Sigmoid colon (tissue), 7 donors: ENCODE measurements at regions of chr16 and their contacts with region 1.

Region 1: DNA sequence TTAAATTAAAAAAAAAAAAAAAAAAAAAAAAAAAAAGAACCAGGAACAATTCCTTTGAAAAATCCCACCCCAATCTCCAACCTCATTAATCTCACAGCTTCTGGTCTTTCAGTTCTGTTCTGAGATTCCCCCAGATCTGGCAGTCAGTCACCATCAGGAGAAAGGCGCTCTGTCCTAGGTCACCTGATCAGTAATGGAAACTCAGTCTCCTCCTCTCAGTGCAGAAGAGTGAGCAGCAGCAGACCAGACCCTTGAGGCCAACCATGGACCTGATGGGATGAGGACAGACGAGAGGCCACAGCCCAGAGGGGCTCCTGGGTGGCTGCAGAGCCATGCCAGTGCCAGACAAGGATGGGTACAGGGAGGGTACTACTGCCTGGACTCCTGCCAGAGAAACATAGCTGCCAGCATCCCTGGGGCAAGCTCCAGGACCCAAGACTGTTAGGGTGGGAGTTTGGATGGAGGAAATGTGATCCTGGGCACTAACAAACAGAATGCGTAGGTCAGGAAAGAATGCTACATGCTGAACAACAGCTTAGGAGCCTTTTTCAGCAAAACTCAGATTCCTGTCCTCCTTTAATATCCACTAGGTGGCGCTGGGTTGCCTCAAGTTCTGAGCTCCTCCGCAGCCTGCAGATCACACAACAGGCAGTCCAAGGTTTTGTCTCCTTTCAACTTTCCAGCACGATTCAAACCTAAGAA is 28.7 kb downstream of the MPG start:
- DNase-seq: no peak
- H3K4me3 ChIP-seq: no peak overlapping the region
- H3K27ac ChIP-seq: no peak overlapping the region
- H3K4me1 ChIP-seq: peaks cover 0 to 7% (median 0%) of the 10 kb centered on the region in 4 donors
- H3K27me3 ChIP-seq: no peaks in the 10 kb centered on the region
- CTCF ChIP-seq: peak; percentile 20 to 83 (median 74)
- EP300 ChIP-seq: no peak
- POLR2A ChIP-seq: no peak

Region 2: DNA sequence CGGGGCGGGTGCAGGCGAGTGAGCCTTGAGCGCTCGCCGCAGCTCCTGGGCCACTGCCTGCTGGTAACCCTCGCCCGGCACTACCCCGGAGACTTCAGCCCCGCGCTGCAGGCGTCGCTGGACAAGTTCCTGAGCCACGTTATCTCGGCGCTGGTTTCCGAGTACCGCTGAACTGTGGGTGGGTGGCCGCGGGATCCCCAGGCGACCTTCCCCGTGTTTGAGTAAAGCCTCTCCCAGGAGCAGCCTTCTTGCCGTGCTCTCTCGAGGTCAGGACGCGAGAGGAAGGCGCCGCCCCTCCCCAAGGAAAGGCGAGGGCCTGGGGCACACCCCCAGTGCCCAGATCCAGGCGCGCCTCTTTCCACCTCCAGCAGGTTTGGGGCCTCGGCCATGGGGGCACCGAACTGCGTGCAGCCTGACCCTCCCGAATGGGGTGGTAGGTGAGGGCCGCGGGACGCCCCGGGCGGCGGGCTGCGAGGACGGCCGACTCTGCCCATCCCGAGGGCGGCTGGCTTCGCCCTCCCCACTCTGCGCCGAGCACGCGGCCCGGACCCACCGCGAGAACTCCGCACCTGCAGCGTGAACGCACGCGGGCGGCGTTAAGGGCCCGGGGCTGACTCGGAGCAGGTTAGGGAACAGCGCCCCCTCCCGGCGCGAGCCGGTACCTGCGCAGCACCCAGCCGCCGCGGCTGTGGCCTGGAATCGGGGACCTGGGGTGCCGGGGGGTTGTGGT is 74.3 kb after region 1 on chr16:
- intact Hi-C with region 1: loop called (anchors 1 kb)
- DNase-seq: peak; percentile 81
- H3K4me3 ChIP-seq: peak overlapping the region in 3 of 4 donors; percentile 16 to 36 (median 30)
- H3K27ac ChIP-seq: no peak overlapping the region
- H3K4me1 ChIP-seq: peaks cover 0 to 19% (median 18%) of the 10 kb centered on the region in 4 donors
- H3K27me3 ChIP-seq: peaks cover 34 to 45% (median 42%) of the 10 kb centered on the region in 3 donors
- CTCF ChIP-seq: peak; percentile 84 to 96 (median 92)
- EP300 ChIP-seq: no peak
- POLR2A ChIP-seq: no peak